ENCODE measurements at regions of chr4 and their contacts with region 1.

Region 1: GRCh38 chr4:138910607-138911336 is 104.8 kb upstream of the NOCT start:
- DNase-seq: peak; percentile 65 to 71
- H3K4me3 ChIP-seq: no peak overlapping the region
- H3K4me3 Mint-ChIP-seq: peak overlapping the region; percentile 18
- H3K27ac Mint-ChIP-seq: peak overlapping the region; percentile 61
- H3K4me1 ChIP-seq: peaks cover 13% of the 10 kb centered on the region
- H3K4me1 Mint-ChIP-seq: peaks cover 15% of the 10 kb centered on the region
- H3K27me3 ChIP-seq: no peaks in the 10 kb centered on the region
- H3K27me3 Mint-ChIP-seq: no peaks in the 10 kb centered on the region
- CTCF ChIP-seq: no peak

Region 2: DNA sequence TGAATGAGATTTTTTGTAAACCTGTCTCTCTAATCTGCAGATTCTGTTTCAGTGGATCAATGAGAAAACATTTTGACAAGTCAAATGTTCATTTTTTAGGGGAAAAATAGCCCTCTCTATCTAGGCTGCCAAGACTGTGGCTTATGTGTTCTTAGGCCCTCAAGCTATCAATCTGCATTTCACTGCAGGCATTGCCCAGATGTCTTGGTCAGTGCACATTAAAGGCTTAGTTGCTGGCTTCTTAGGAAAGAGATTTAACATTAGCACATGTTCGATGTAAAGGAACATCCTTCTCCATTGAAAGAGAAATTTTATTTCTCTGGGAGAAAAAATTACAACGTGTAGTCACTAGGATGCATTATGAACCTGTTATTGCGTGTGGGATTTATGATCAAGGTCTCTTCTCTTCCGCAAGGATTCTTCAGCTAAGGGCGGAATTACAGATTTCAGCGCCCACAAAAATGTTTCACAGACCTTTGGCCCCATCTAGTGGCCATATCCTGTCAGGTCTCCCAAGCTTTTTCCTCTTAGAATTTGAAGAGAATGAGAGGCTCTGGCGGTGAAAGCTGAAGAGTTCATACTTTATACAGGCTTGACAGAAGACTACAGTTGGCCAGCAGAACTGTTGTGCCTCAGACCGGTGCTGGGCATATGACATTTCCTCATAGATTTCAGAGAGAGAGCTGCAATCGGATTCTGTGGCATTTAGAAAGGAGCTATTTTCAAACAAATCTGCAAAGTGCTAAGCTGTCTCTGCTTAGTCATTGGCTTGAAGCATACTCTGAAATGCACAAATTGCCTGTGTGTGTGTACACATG is 39.8 kb before region 1 on chr4:
- CTCF ChIA-PET with region 1: no interaction called
- POLR2A ChIA-PET with region 1: no interaction called
- intact Hi-C with region 1: no loop called
- DNase-seq: peak; percentile 62 to 78
- H3K4me3 ChIP-seq: no peak overlapping the region
- H3K4me3 Mint-ChIP-seq: no peak overlapping the region
- H3K27ac Mint-ChIP-seq: no peak overlapping the region
- H3K4me1 ChIP-seq: peaks cover 11% of the 10 kb centered on the region
- H3K4me1 Mint-ChIP-seq: peaks cover 7% of the 10 kb centered on the region
- H3K27me3 ChIP-seq: no peaks in the 10 kb centered on the region
- H3K27me3 Mint-ChIP-seq: no peaks in the 10 kb centered on the region
- CTCF ChIP-seq: peak; percentile 70 to 80

Region 3: GRCh38 chr4:138897811-138898226 is 13.0 kb before region 1 on chr4:
- CTCF ChIA-PET with region 1: no interaction called
- POLR2A ChIA-PET with region 1: interaction called, 3 read pairs
- intact Hi-C with region 1: loop called (anchors 1 kb)
- DNase-seq: peak; percentile 55 to 61
- H3K4me3 ChIP-seq: no peak overlapping the region
- H3K4me3 Mint-ChIP-seq: peak overlapping the region; percentile 50
- H3K27ac Mint-ChIP-seq: peak overlapping the region; percentile 71
- H3K4me1 ChIP-seq: peaks cover 41% of the 10 kb centered on the region
- H3K4me1 Mint-ChIP-seq: peaks cover 28% of the 10 kb centered on the region
- H3K27me3 ChIP-seq: no peaks in the 10 kb centered on the region
- H3K27me3 Mint-ChIP-seq: no peaks in the 10 kb centered on the region
- CTCF ChIP-seq: no peak